Head of caudate nucleus (tissue), 42 donors: ENCODE measurements at regions of chr2 and their contacts with region 1.

Region 1: DNA sequence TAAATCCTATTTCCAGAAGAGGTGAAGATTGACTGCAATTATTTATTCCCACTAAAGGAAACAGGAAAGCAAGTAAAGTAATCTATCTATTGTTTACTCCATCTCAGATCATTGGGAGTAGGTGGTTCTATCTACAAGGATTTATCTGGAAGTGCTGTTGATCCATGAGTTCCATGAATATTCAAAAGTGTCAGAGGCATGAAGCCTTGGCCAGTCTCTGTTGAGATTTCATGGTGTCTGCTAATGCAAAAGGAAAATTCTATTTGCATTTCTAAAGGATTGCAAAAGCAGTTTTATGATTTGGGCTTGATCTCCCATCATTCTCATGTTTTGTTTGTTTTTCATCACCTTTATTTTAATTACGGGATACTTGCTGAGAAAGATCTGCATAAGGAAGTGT is 102.4 kb upstream of the ST6GAL2 start:
- DNase-seq: no peak

Region 2: DNA sequence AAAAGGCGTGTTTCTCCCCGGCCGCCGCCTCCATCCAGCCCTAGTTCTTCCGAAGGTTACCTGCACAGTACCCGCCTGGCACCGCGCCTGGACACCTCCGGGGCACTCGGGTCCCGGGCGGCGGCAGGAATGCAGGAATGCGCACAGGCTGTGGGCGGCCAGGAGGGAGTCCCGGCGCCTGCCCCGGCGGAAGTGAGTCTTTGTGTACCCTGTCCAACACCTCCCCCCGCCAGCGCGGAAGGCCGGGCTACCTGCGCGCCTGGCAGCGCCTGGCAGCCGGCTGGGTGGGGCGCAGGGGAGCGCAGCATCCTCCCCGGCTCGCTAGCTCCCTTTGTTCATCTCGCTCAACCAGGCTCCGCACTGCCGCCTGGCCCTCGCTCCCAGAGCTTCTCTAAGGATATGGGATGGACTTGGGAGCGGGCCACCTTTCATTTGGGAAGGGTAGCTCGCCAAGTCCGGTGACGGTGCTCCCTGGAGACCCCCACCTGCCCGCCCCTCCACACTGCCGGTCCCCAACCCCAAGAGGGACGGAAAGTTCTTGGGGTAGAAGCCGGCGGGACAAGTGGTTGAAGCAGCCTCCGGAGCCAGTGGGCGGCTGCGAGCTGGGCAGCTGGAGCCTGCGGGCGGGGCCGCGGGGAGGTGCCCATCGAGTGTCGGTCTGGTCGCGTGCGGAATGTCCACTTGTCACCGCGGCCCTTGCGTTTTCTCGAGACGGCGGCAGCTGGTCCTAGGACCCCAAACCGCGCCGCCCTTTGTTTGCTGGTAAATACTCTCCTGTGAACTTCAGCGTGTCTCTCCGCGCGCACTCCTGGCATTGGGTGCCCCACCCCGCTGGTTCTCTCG is 101.2 kb before region 1 on chr2:
- intact Hi-C with region 1: loop called (anchors 5 kb)
- DNase-seq: peak in 39 of 42 donors; percentile 26 to 73 (median 48)